ENCODE measurements at regions of chr4 and their contacts with region 1.

Region 1: DNA sequence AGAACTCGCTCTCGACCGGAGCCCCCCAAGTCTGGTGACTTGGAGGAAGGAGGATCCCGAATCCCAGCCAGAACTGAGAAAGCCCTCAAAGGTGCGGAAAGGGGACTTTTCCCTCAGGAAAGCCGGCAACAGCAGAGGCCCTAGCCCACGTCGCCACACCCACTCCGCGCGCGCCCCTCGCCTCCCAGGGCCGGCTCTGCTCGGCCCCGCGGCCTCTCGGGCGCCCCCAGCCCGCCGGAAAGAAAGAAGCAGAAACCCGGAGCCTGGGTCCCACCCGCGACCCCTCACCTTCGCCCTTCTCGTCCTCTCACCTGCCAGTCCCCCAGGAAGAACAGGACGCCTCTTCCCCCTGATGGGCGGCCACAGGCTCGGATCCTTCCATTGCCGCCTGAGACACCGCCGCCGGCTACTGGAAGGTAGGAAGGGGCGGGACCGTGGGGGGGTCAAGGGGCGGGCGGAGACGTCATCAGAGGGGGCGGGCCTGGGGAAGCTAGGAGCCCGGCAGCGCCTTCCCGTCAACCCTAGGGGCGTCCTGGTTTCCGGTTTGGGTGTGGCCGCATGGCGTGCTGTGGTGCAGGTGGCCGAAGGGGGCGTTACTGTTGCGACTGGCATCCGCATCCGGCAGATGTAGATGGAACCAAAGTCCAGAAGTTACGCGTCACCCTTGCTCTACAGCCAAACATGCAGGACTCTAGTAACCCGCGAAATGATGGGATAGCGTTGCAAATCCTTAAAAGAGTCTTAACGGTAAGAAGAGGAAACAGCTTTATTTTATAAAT is at the start of gene UBA6:
- DNase-seq: peak; percentile 94
- H3K4me3 Mint-ChIP-seq: peak within 1 kb of the TSS; percentile 99
- H3K27ac Mint-ChIP-seq: peak within 1 kb of the TSS; percentile 96
- H3K4me1 Mint-ChIP-seq: peaks cover 68% of the 10 kb centered on the region
- H3K27me3 Mint-ChIP-seq: no peaks in the 10 kb centered on the region
- total RNA-seq, gene UBA6: 78.2 and 78.5 TPM in 2 replicates

Region 2: GRCh38 chr4:67581208-67581857 is 119.6 kb before region 1 on chr4:
- intact Hi-C with region 1: loop called (anchors 1 kb)
- DNase-seq: peak; percentile 27
- H3K4me3 Mint-ChIP-seq: peak overlapping the region; percentile 63
- H3K27ac Mint-ChIP-seq: peak overlapping the region; percentile 91
- H3K4me1 Mint-ChIP-seq: peaks cover 26% of the 10 kb centered on the region
- H3K27me3 Mint-ChIP-seq: no peaks in the 10 kb centered on the region

Region 3: GRCh38 chr4:67684839-67685531 is 15.9 kb before region 1 on chr4:
- intact Hi-C with region 1: loop called (anchors 2 kb)
- DNase-seq: no peak
- H3K4me3 Mint-ChIP-seq: peak overlapping the region; percentile 4
- H3K27ac Mint-ChIP-seq: peak overlapping the region; percentile 72
- H3K4me1 Mint-ChIP-seq: peaks cover 41% of the 10 kb centered on the region
- H3K27me3 Mint-ChIP-seq: no peaks in the 10 kb centered on the region

Region 4: DNA sequence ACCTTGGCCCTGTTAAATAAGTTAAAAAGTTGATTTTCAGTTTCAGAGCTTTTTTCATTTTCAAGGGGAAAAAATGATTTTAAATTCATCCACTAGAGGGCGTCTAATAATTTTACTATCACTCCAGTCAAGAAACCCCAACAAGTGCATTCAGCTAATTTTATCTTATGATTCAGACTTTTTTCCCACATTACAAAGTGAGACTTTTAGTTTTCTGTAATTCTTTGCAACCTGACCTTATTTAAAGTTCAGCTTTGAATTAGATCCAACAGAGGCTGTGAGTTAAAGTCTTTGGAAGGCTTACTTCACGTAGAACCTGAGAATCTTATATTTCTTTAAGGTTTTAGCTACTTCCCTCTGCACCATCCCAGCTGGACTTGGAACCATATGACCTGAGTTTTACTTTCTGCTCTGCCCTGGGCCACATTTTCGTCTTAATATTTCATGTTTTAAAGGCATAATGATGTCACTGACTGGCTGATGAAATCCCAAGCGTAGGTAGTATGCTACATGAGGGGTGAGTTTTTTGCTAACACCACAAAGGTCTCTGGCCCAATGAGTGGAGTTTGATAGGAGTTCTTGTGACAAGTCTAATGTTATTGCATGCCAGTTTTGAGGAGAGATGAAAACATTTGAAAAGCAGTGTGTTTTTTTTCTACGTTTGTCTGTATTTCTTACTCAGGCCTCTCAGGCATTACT is 46.0 kb after region 1 on chr4:
- intact Hi-C with region 1: loop called (anchors 1 kb)
- DNase-seq: no peak
- H3K4me3 Mint-ChIP-seq: no peak overlapping the region
- H3K27ac Mint-ChIP-seq: no peak overlapping the region
- H3K4me1 Mint-ChIP-seq: peaks cover 13% of the 10 kb centered on the region
- H3K27me3 Mint-ChIP-seq: no peaks in the 10 kb centered on the region

Region 5: DNA sequence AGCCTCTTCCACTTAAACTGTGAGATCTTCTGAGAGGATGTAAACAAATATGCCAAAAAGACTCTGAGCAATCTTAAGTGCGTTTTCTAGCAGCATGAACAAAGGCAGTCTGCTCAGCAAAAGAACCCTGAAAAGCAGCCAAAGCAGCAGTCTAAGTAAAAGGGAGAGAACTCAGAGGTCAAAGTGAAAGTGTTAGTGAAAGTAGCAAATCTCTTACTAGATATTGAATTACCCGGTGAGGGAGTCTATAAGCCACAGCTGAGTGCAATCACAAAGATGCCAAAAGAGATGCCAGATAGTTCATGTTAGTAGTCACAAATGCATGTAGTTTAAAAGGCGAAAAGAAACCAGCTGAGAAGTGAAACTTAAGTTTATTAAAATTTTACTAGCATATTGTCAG is 61.2 kb after region 1 on chr4:
- intact Hi-C with region 1: no loop called
- DNase-seq: no peak
- H3K4me3 Mint-ChIP-seq: no peak overlapping the region
- H3K27ac Mint-ChIP-seq: no peak overlapping the region
- H3K4me1 Mint-ChIP-seq: peaks cover 5% of the 10 kb centered on the region
- H3K27me3 Mint-ChIP-seq: peaks cover 6% of the 10 kb centered on the region

Region 6: GRCh38 chr4:68349649-68350360 is 648.9 kb after region 1 on chr4 and contains the start of gene YTHDC1:
- intact Hi-C with region 1: loop called (anchors 1 kb)
- DNase-seq: peak; percentile 90
- H3K4me3 Mint-ChIP-seq: peak within 1 kb of the TSS; percentile 91
- H3K27ac Mint-ChIP-seq: peak within 1 kb of the TSS; percentile 96
- H3K4me1 Mint-ChIP-seq: peaks cover 36% of the 10 kb centered on the region
- H3K27me3 Mint-ChIP-seq: peaks cover 12% of the 10 kb centered on the region
- total RNA-seq, gene YTHDC1: 75.6 and 82.3 TPM in 2 replicates

Measured in activated T-helper 1 cell treated with anti-CD3 and anti-CD28 coated beads, Interleukin-12 subunit alpha, Interleukin-12 subunit beta, Interleukin-2, Interleukin-4 antibody, amounts not matched to agents 30 ng/mL and 10 ng/mL and 1 ng/mL, durations not matched to agents 14 hours and 24 hours and 36 hours (primary cell).